Naive thymus-derived CD4-positive, alpha-beta T cell (primary cell): ENCODE measurements at regions of chr15 and their contacts with region 1.

Region 1: DNA sequence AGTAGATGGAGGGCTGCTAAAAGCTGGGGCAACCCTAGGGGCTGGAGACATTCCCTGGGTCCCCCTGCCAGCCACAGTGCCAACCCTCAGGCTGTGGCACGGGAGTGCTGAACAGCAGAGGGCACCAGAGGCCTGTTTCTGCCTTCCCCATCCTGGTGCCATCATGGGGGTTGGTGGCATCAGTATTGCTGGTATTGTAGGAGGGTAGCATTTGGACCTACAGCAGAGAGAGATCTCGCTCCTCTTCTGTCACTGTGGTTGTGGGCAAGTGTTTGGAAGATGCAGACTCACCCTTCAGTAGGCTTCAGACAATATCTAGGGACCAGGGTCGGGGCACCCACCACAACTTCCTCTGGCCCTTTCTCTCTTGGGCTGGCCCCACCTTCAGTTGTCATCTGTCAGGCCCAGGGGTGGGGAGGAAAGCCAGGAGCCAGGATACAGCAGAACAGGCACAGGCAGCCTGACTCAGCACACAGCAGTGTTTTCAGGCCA is 123.5 kb downstream of the RPLP1 start:
- DNase-seq: peak; percentile 38 to 69 (median 58)
- ATAC-seq: peak; percentile 87
- H3K4me3 ChIP-seq: no peak overlapping the region
- H3K4me3 Mint-ChIP-seq: no peak overlapping the region
- H3K27ac ChIP-seq: no peak overlapping the region
- H3K27ac Mint-ChIP-seq: peak overlapping the region in 3 of 9 donors; percentile 23 to 38 (median 24)
- H3K4me1 ChIP-seq: peaks cover 7 to 9% of the 10 kb centered on the region in 2 donors
- H3K4me1 Mint-ChIP-seq: peaks cover 14 to 44% (median 30%) of the 10 kb centered on the region in 7 donors
- H3K27me3 ChIP-seq: no peaks in the 10 kb centered on the region
- H3K27me3 Mint-ChIP-seq: peaks cover 0 to 11% (median 0%) of the 10 kb centered on the region in 5 donors

Region 2: DNA sequence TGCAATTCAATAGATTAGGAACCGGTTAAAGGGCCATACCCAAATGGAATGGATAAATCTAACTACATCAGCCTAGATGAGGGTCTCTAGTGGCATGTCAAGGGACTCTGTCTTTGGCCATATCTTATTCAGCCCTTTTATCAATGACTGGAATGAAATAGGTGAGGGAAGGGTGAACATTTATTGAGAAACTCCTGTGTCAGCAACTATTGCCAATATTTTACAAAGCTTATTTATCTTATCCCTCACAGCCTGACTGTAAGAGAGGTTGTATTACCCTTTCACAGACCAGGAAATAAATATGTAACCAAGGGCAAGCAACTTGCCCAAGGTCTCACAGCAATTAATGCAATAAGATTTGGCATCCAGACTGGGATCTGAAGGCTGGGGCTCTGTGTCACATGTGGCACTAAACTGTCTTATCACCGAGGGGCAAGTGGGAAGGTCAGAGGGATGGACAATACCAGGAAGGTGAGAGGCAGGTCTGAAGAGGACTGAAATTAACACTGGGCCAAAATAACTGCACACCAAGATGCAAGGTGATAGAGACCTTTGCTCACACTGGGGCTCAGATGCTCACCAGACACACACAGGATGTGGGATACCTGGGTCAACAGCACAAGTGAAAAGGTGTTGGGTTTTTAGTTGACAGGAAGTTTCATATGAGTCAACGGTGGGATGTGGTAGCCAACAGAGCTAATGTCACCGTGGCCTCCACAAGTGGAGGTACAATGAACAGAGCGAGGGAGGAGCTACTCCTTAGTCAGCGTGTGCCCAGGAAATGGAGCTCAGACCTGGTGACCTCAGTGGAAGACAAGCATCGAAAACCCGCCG is 137.9 kb after region 1 on chr15:
- CTCF ChIA-PET with region 1: no interaction called
- POLR2A ChIA-PET with region 1: no interaction called
- intact Hi-C with region 1: loop called in 1 of 2 experiments (anchors 5 kb)
- DNase-seq: peak in 8 of 9 donors; percentile 60 to 80 (median 70)
- ATAC-seq: peak; percentile 88
- H3K4me3 ChIP-seq: no peak overlapping the region
- H3K4me3 Mint-ChIP-seq: peak overlapping the region; percentile 52 to 80 (median 72)
- H3K27ac ChIP-seq: no peak overlapping the region
- H3K27ac Mint-ChIP-seq: peak overlapping the region; percentile 71 to 90 (median 78)
- H3K4me1 ChIP-seq: peaks cover 32 to 50% of the 10 kb centered on the region in 2 donors
- H3K4me1 Mint-ChIP-seq: peaks cover 31 to 63% (median 54%) of the 10 kb centered on the region in 7 donors
- H3K27me3 ChIP-seq: no peaks in the 10 kb centered on the region
- H3K27me3 Mint-ChIP-seq: peaks cover 0 to 22% (median 0%) of the 10 kb centered on the region in 5 donors

Region 3: GRCh38 chr15:69729161-69729748 is 153.2 kb after region 1 on chr15:
- CTCF ChIA-PET with region 1: no interaction called
- POLR2A ChIA-PET with region 1: no interaction called
- intact Hi-C with region 1: loop called in 1 of 2 experiments (anchors 2 kb)
- DNase-seq: peak; percentile 38 to 79 (median 61)
- ATAC-seq: peak; percentile 53
- H3K4me3 ChIP-seq: no peak overlapping the region
- H3K4me3 Mint-ChIP-seq: no peak overlapping the region
- H3K27ac ChIP-seq: no peak overlapping the region
- H3K27ac Mint-ChIP-seq: peak overlapping the region in 3 of 9 donors; percentile 5 to 22 (median 19)
- H3K4me1 ChIP-seq: peaks cover 0 to 12% of the 10 kb centered on the region in 2 donors
- H3K4me1 Mint-ChIP-seq: peaks cover 13 to 64% (median 23%) of the 10 kb centered on the region in 7 donors
- H3K27me3 ChIP-seq: no peaks in the 10 kb centered on the region
- H3K27me3 Mint-ChIP-seq: peaks cover 0 to 30% (median 0%) of the 10 kb centered on the region in 5 donors

Region 4: DNA sequence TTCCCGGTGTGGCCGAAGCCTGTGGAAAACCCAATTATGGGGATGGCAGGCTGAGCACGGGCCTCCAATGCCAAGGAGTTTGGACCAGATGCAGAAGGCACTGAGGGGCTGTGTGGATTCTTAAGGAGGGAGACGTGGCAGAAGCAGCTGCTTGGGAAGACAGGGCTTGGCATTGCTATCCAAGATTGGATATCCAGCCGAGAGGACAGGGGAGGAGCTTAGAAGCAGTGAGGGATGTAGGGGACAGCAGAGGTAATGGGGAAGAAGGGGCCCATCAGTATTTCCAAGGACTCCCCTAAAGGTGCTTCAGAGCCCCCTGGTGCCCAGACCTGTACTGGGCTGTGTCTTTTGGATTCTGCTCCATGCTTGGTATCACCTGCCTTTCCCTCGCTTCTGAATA is 634.4 kb after region 1 on chr15:
- CTCF ChIA-PET with region 1: no interaction called
- POLR2A ChIA-PET with region 1: no interaction called
- intact Hi-C with region 1: loop called in 1 of 2 experiments (anchors 1 kb)
- DNase-seq: no peak
- ATAC-seq: no peak
- H3K4me3 ChIP-seq: no peak overlapping the region
- H3K4me3 Mint-ChIP-seq: no peak overlapping the region
- H3K27ac ChIP-seq: no peak overlapping the region
- H3K27ac Mint-ChIP-seq: no peak overlapping the region
- H3K4me1 ChIP-seq: no peaks in the 10 kb centered on the region
- H3K4me1 Mint-ChIP-seq: peaks cover 0 to 8% (median 0%) of the 10 kb centered on the region in 7 donors
- H3K27me3 ChIP-seq: no peaks in the 10 kb centered on the region
- H3K27me3 Mint-ChIP-seq: peaks cover 0 to 28% (median 0%) of the 10 kb centered on the region in 5 donors

Region 5: DNA sequence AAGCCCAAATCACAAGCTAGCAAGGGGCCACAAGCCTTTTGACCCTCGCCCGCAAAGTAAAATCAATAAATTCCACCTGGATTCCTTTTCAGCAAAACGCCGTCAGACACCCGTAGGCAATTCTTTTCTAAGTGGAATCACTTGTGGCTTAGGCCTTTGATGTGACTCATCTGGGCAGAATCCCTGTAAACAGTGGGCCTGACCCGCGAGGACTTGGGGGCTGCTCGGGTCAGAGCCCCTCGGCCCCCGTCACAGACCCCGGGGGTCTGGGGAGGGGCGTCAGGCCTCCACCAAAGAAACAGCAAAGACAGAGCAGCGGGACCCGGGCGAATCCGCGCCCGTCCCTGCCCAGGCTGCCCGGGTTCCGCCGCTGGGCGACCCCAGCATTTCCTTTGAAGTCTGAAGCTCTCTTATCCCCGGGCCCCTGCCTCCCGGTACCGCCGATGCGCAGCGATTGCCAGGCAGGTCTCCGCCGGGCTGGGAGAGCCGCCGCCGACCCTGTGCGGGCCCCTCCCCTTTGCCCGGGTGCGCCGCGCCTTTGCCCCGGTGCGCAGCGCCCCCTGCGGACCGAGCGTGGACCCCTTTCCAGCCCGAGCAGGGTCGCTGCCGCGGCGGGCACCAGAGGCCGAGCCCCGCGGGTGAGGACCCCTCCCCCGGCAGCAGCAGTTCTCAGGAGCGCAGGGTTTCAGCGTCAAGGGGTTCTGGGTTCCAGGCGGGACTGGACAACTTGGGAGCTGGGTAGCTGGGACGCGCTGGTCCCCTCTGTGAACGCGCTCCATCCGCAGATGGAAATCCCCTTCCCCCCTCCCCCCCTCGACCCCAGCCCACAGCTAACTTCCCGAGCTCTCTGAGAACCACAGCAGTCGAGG is 1009.0 kb after region 1 on chr15:
- CTCF ChIA-PET with region 1: no interaction called
- POLR2A ChIA-PET with region 1: no interaction called
- intact Hi-C with region 1: loop called in 1 of 2 experiments (anchors 1 kb)
- DNase-seq: peak; percentile 35 to 66 (median 52)
- ATAC-seq: peak; percentile 88
- H3K4me3 ChIP-seq: no peak overlapping the region
- H3K4me3 Mint-ChIP-seq: peak overlapping the region in 9 of 10 donors; percentile 42 to 84 (median 71)
- H3K27ac ChIP-seq: no peak overlapping the region
- H3K27ac Mint-ChIP-seq: peak overlapping the region in 1 of 9 donors; percentile 49
- H3K4me1 ChIP-seq: peaks cover 0 to 9% of the 10 kb centered on the region in 2 donors
- H3K4me1 Mint-ChIP-seq: peaks cover 0 to 28% (median 20%) of the 10 kb centered on the region in 7 donors
- H3K27me3 ChIP-seq: no peaks in the 10 kb centered on the region
- H3K27me3 Mint-ChIP-seq: peaks cover 0 to 36% (median 17%) of the 10 kb centered on the region in 5 donors